GM12878 (cell line): ENCODE measurements at regions of chr13 and their contacts with region 1.

Region 1: DNA sequence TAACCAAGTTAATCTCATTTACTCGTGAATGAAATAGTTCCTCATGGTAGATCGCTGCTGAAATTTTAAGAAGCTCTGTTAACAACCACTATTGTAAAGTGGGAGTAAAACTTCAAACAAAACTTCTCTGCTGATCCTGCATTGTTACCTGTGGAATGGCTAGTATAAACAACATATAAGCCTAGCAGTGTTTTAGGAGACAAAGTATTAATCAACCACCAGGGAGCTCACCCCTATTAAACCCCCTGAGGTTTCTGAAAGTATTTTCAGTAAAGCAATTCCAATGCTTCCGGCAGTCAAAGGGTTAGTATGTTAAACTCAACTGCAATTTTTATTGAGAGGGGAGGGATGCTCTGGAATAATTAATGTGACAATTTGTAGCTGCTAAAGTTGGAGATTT is 30.0 kb upstream of the PCDH17 start:
- DNase-seq: no peak
- ATAC-seq: no peak
- H3K4me3 ChIP-seq: no peak overlapping the region
- H3K27ac ChIP-seq: no peak overlapping the region
- H3K4me1 ChIP-seq: no peaks in the 10 kb centered on the region
- H3K27me3 ChIP-seq: no peaks in the 10 kb centered on the region
- CTCF ChIP-seq: no peak
- EP300 ChIP-seq: no peak
- POLR2A ChIP-seq: no peak
- RAD21 ChIP-seq: no peak

Region 2: GRCh38 chr13:57409121-57409520 is 192.4 kb before region 1 on chr13:
- CTCF ChIA-PET with region 1: no interaction called
- POLR2A ChIA-PET with region 1: no interaction called
- RAD21 ChIA-PET with region 1: no interaction called
- SMC1A ChIA-PET with region 1: no interaction called
- in situ Hi-C with region 1: no loop called
- intact Hi-C with region 1: no loop called
- DNase-seq: no peak
- ATAC-seq: no peak
- H3K4me3 ChIP-seq: no peak overlapping the region
- H3K27ac ChIP-seq: no peak overlapping the region
- H3K4me1 ChIP-seq: no peaks in the 10 kb centered on the region
- H3K27me3 ChIP-seq: no peaks in the 10 kb centered on the region
- CTCF ChIP-seq: no peak
- EP300 ChIP-seq: no peak
- POLR2A ChIP-seq: no peak
- RAD21 ChIP-seq: no peak

Region 3: GRCh38 chr13:57588639-57589038 is 12.9 kb before region 1 on chr13:
- CTCF ChIA-PET with region 1: interaction called, 8 read pairs
- POLR2A ChIA-PET with region 1: interaction called, 4 read pairs
- RAD21 ChIA-PET with region 1: interaction called, 17 read pairs
- SMC1A ChIA-PET with region 1: interaction called, 12 read pairs
- in situ Hi-C with region 1: no loop called
- intact Hi-C with region 1: no loop called
- DNase-seq: no peak
- ATAC-seq: no peak
- H3K4me3 ChIP-seq: no peak overlapping the region
- H3K27ac ChIP-seq: no peak overlapping the region
- H3K4me1 ChIP-seq: no peaks in the 10 kb centered on the region
- H3K27me3 ChIP-seq: no peaks in the 10 kb centered on the region
- CTCF ChIP-seq: no peak
- EP300 ChIP-seq: no peak
- POLR2A ChIP-seq: no peak
- RAD21 ChIP-seq: no peak

Region 4: GRCh38 chr13:57612568-57612967 is 11.0 kb after region 1 on chr13:
- CTCF ChIA-PET with region 1: no interaction called
- POLR2A ChIA-PET with region 1: interaction called, 8 read pairs
- RAD21 ChIA-PET with region 1: interaction called, 14 read pairs
- SMC1A ChIA-PET with region 1: interaction called, 13 read pairs
- in situ Hi-C with region 1: no loop called
- intact Hi-C with region 1: no loop called
- DNase-seq: no peak
- ATAC-seq: peak; percentile 71
- H3K4me3 ChIP-seq: no peak overlapping the region
- H3K27ac ChIP-seq: no peak overlapping the region
- H3K4me1 ChIP-seq: no peaks in the 10 kb centered on the region
- H3K27me3 ChIP-seq: no peaks in the 10 kb centered on the region
- CTCF ChIP-seq: no peak
- EP300 ChIP-seq: no peak
- POLR2A ChIP-seq: no peak
- RAD21 ChIP-seq: no peak